ENCODE measurements at regions of chr1 and their contacts with region 1.

Region 1: DNA sequence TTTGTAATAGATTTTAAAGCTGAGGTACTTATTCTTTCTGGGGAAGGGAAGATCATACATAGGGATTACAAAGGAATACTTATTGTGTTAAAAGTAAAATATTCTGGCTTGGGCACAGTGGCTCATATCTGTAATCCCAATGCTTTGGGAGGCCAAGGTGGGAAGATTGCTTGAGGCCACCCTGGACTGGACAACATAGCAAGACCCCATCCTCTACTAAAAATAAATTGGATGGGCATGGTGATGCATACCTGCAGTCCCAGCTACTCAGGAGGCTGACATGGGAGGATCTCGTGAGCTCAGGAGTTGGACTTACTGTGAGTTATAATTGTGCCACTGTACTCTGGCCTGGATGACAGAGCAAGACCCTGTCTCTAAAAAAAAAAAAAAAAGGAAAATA is 27.6 kb downstream of the GABPB2 start:
- DNase-seq: no peak
- H3K4me3 ChIP-seq: no peak overlapping the region
- H3K27ac ChIP-seq: no peak overlapping the region
- H3K4me1 ChIP-seq: no peaks in the 10 kb centered on the region
- H3K27me3 ChIP-seq: no peaks in the 10 kb centered on the region
- CTCF ChIP-seq: no peak
- EP300 ChIP-seq: no peak
- POLR2A ChIP-seq: no peak
- RAD21 ChIP-seq: no peak

Region 2: DNA sequence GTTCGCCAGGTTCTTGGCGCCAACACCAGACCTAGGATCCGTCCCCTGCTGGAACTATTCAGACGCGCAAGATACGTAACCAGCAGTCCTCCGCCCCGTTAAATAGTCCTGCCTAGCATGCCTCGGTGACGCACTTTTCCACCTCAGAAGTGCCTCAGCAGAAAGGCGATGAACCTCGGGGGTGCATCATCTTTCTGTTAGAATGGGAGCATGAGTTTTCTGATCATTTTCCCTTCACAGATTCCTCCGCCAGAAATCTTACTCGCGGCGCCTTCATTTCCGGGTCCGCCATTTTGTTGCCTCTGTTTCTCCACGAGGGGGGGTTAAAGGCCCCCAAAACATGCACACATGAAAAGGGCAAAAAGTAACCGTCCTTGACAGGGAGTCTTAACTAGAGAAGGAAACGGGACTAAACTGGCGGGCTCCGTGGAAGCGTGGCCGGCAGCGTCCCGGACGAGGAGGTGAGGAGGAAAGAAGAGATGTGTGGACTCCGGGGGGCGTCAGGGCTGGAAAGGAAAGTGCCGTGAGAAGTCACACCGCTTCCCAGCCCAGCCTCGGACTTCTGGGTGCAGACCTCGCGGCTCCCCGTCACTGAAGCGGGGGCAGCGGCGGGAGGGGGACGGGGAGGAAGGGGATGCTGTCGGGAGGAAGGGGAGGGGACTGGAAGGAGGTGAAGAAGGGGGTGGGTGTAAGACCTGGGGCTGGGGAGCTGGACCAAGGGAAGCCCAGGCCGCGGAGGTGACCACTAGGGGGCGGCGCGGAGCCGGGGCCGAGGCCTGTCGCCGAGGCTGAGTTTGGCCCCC is 27.5 kb before region 1 on chr1 and contains the start of gene GABPB2:
- CTCF ChIA-PET with region 1: interaction called, 28 read pairs
- POLR2A ChIA-PET with region 1: interaction called, 4 read pairs
- DNase-seq: peak; percentile 77 to 98
- H3K4me3 ChIP-seq: peak within 1 kb of the TSS; percentile 83 to 94 (median 92)
- H3K27ac ChIP-seq: peak within 1 kb of the TSS; percentile 98
- H3K4me1 ChIP-seq: peaks cover 0 to 4% (median under 1%) of the 10 kb centered on the region in 4 experiments; a peak in 1 of 7 replicates
- H3K27me3 ChIP-seq: no peaks in the 10 kb centered on the region
- CTCF ChIP-seq: peak; percentile 80 to 90 (median 83)
- EP300 ChIP-seq: 0 out of 3 replicates have a peak, but pooled peaks of 1 of the 2 experiments have one; percentile 19
- POLR2A ChIP-seq: peak; percentile 74 to 78; a peak in 1 of 3 replicates
- RAD21 ChIP-seq: peak; percentile 61 to 63
- total RNA-seq, gene GABPB2: 1.9 and 2.4 TPM in 2 replicates

Region 3: DNA sequence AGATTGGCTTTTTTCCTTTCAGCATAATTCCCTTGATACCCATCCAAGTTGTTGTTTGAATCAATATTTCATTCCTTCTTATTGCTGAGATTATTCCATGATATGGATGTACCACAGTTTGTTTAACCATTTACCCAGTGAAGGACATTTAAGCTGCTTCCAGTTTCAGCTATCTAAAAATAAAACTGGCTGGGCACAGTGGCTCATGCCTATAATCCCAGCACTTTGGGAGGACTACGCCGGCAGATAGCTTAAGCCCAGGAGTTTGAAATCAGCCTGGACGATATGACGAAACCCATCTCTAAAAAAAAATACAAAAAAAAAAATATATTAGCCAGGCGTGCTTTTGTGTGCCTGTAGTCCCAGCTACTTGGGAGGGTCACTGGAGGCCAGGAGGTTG is 15.8 kb after region 1 on chr1:
- CTCF ChIA-PET with region 1: interaction called, 64 read pairs
- POLR2A ChIA-PET with region 1: interaction called, 3 read pairs
- DNase-seq: no peak
- H3K4me3 ChIP-seq: no peak overlapping the region
- H3K27ac ChIP-seq: no peak overlapping the region
- H3K4me1 ChIP-seq: no peaks in the 10 kb centered on the region
- H3K27me3 ChIP-seq: no peaks in the 10 kb centered on the region
- CTCF ChIP-seq: no peak
- EP300 ChIP-seq: no peak
- POLR2A ChIP-seq: no peak
- RAD21 ChIP-seq: no peak

Region 4: GRCh38 chr1:151130987-151131586 is 33.0 kb after region 1 on chr1:
- CTCF ChIA-PET with region 1: interaction called, 27 read pairs
- POLR2A ChIA-PET with region 1: interaction called, 4 read pairs
- DNase-seq: peak; percentile 87 to 91
- H3K4me3 ChIP-seq: peak overlapping the region; percentile 37 to 64 (median 45); a peak in 7 of 8 replicates
- H3K27ac ChIP-seq: peak overlapping the region; percentile 42; the same call in 1 of the 2 replicates
- H3K4me1 ChIP-seq: peaks cover 0 to 12% (median 8%) of the 10 kb centered on the region in 4 experiments; a peak in 5 of 7 replicates
- H3K27me3 ChIP-seq: peaks cover 0 to 28% (median 20%) of the 10 kb centered on the region in 4 experiments; a peak in 5 of 7 replicates
- CTCF ChIP-seq: no peak
- EP300 ChIP-seq: no peak
- POLR2A ChIP-seq: peak in 1 of 2 experiments; percentile 67; a peak in 1 of 3 replicates
- RAD21 ChIP-seq: 0 out of 4 replicates have a peak, but pooled peaks of 1 of the 2 experiments have one; percentile 10

Region 5: GRCh38 chr1:151165738-151166505 is 67.8 kb after region 1 on chr1 and contains the starts of genes LYSMD1 and SCNM1:
- CTCF ChIA-PET with region 1: interaction called, 285 read pairs
- POLR2A ChIA-PET with region 1: interaction called, 4 read pairs
- DNase-seq: peak; percentile 90 to 93
- H3K4me3 ChIP-seq: peak within 1 kb of the TSS; percentile 80 to 99 (median 95)
- H3K27ac ChIP-seq: peak within 1 kb of the TSS; percentile 42
- H3K4me1 ChIP-seq: peaks cover 5 to 10% (median 5%) of the 10 kb centered on the region in 4 experiments
- H3K27me3 ChIP-seq: no peaks in the 10 kb centered on the region
- CTCF ChIP-seq: no peak
- EP300 ChIP-seq: peak in 1 of 2 experiments; percentile 71; a peak in 1 of 3 replicates
- POLR2A ChIP-seq: peak in 1 of 2 experiments; percentile 43; a peak in 1 of 3 replicates
- RAD21 ChIP-seq: no peak
- total RNA-seq, gene LYSMD1: 4.9 and 6.0 TPM in 2 replicates
- total RNA-seq, gene SCNM1: 44.5 and 46.2 TPM in 2 replicates

Region 6: GRCh38 chr1:151211972-151212705 is 114.0 kb after region 1 on chr1:
- CTCF ChIA-PET with region 1: no interaction called
- POLR2A ChIA-PET with region 1: no interaction called
- DNase-seq: no peak
- H3K4me3 ChIP-seq: no peak overlapping the region
- H3K27ac ChIP-seq: no peak overlapping the region
- H3K4me1 ChIP-seq: no peaks in the 10 kb centered on the region
- H3K27me3 ChIP-seq: no peaks in the 10 kb centered on the region
- CTCF ChIP-seq: no peak
- EP300 ChIP-seq: no peak
- POLR2A ChIP-seq: no peak
- RAD21 ChIP-seq: no peak

Region 7: DNA sequence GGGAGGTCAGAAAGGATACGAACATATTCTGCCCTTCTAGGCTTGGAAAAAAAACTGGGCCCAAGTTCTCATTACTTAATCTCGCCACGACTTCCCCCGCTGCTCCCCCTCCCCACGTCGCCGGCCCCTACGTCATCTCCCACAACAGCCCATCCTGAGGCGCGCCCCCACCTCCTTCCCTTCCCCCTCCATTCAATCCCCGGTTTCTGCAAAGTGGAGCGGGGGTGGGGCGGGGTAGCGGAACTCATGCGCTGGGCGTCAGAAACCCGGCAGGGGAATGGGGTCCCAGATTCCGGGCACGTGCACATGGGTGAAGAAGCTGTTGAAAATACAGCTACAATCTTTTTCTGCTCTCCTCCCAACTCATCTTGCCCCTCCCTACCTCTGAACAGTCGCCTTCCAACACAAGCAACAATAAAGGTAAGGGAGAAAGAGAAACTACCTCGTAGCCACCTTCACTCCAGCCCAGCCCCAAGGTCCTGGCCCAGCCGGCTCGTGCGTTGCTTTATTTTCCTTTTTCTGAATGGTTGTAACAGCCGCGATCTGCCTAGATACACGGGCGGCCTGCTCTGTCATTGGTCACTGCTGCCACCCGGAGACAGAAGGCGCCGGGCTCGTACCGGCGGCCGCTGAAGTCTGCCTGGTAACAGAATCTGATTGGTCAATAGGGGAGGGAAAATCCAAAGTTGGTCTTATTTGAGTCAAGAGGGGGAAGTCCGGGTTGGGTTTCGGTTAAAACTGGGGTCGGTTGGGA is 248.8 kb after region 1 on chr1 and contains the start of gene RFX5:
- CTCF ChIA-PET with region 1: no interaction called
- POLR2A ChIA-PET with region 1: no interaction called
- DNase-seq: peak; percentile 89 to 98
- H3K4me3 ChIP-seq: peak within 1 kb of the TSS; percentile 61 to 76 (median 66)
- H3K27ac ChIP-seq: peak within 1 kb of the TSS; percentile 99
- H3K4me1 ChIP-seq: peaks cover 4 to 14% (median 12%) of the 10 kb centered on the region in 4 experiments; a peak in 5 of 7 replicates
- H3K27me3 ChIP-seq: no peaks in the 10 kb centered on the region
- CTCF ChIP-seq: no peak
- EP300 ChIP-seq: peak; percentile 74 to 97
- POLR2A ChIP-seq: peak; percentile 70 to 82
- RAD21 ChIP-seq: peak in 1 of 2 experiments; percentile 0; a peak in 1 of 4 replicates
- total RNA-seq, gene RFX5: 57.6 and 59.7 TPM in 2 replicates

Measured in H1 (cell line).